ENCODE measurements at regions of chr12 and their contacts with region 1.

Region 1: DNA sequence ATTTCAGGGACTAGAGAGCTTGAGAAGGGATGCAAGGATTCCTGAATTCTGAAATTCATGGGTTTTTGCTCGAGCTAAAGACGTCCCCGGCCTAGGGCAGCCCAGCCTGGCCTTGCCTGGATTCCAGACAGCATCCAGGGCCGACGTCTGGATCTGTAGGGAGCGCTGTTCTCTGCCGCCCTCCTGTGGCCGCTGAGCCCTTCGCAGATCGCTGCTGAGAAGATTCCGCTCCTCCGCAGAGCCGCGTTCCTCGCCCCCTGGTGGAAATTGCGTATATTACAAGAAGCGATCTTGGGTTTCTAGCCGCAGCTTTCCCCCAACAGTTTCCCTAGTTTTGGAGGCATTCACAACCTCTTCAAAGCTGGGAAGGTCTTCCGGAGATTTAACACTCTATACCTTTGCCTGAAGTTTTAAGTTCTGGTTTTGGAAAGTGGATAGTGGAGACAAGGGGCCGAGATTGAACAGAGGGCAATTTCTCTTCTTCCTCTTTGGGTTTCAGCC is 5.1 kb downstream of the CISTR start:
- DNase-seq: peak; percentile 70
- ATAC-seq: peak; percentile 75
- H3K4me3 Mint-ChIP-seq: peak overlapping the region; percentile 44
- H3K27ac Mint-ChIP-seq: peak overlapping the region; percentile 57
- H3K4me1 Mint-ChIP-seq: peaks cover 18% of the 10 kb centered on the region
- H3K27me3 Mint-ChIP-seq: peaks cover 40% of the 10 kb centered on the region
- CTCF ChIP-seq: peak; percentile 100

Region 2: DNA sequence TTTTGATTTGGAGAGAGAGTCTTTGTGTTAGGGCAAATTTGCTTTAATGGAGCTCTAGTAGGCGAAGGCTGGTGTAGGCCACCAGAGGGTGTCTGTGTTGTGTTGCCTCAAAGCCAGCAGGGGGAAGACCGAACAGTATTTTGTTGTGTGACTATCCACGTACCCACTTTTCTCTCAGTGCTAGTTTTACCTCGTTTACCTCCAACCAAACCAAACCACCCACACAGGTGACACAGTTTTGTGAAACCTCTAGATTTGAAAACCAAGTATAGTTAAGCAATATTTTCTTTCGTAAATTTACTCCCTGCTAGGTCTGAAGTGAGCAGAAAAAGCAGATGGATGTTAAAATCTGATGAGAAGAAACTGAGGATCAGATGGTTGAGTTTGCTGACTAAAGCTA is 203.1 kb before region 1 on chr12:
- CTCF ChIA-PET with region 1: interaction called, 29 read pairs
- POLR2A ChIA-PET with region 1: no interaction called
- intact Hi-C with region 1: loop called (anchors 1 kb)
- DNase-seq: no peak
- ATAC-seq: peak; percentile 93
- H3K4me3 Mint-ChIP-seq: no peak overlapping the region
- H3K27ac Mint-ChIP-seq: peak overlapping the region; percentile 67
- H3K4me1 Mint-ChIP-seq: peaks cover 5% of the 10 kb centered on the region
- H3K27me3 Mint-ChIP-seq: no peaks in the 10 kb centered on the region
- CTCF ChIP-seq: no peak

Region 3: GRCh38 chr12:53701518-53702260 is 45.0 kb before region 1 on chr12:
- CTCF ChIA-PET with region 1: interaction called, 99 read pairs
- POLR2A ChIA-PET with region 1: interaction called, 12 read pairs
- intact Hi-C with region 1: loop called (anchors 1 kb)
- DNase-seq: peak; percentile 56
- ATAC-seq: peak; percentile 85
- H3K4me3 Mint-ChIP-seq: no peak overlapping the region
- H3K27ac Mint-ChIP-seq: no peak overlapping the region
- H3K4me1 Mint-ChIP-seq: peaks cover 4% of the 10 kb centered on the region
- H3K27me3 Mint-ChIP-seq: peaks cover 71% of the 10 kb centered on the region
- CTCF ChIP-seq: peak; percentile 65

Region 4: DNA sequence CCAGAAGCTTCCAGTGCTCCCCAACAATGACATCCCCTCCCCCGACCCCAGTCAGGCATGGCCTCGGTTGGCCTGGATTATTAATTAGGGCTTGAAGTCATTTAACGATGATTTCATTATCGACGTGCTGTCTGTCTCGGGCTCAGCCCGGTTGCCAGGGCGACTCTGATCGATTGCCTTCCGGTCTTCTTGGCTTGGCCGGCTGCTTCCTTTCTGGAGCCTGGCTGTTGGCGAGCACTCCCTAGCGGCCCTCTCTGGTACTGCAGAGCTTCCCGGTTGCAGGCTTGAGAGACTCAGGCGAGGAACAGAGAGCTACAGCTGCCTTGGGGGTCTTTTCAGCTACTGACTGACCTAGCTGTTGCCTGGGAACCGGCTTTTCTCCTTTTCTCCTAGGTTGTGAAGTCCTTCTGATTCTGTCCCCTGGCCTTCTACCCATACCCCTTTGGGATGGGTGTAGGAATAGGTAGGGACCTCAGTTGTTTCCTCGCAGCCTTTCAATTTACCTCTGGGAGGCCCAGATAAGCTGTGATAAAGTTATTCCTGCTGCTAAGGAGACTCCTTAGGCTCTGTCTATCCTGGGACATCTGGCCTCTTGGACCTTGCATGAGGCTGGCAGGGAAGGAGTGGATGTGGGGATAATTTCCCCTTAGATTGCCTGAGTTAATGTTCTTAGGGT is 10.6 kb after region 1 on chr12:
- CTCF ChIA-PET with region 1: interaction called, 80 read pairs
- POLR2A ChIA-PET with region 1: interaction called, 3 read pairs
- intact Hi-C with region 1: loop called (anchors 1 kb)
- DNase-seq: peak; percentile 75
- ATAC-seq: peak; percentile 75
- H3K4me3 Mint-ChIP-seq: peak overlapping the region; percentile 48
- H3K27ac Mint-ChIP-seq: peak overlapping the region; percentile 8
- H3K4me1 Mint-ChIP-seq: peaks cover 22% of the 10 kb centered on the region
- H3K27me3 Mint-ChIP-seq: peaks cover 29% of the 10 kb centered on the region
- CTCF ChIP-seq: no peak

Region 5: GRCh38 chr12:54300732-54301427 is 554.2 kb after region 1 on chr12 and contains the start of gene NFE2:
- CTCF ChIA-PET with region 1: no interaction called
- POLR2A ChIA-PET with region 1: no interaction called
- intact Hi-C with region 1: no loop called
- DNase-seq: no peak
- ATAC-seq: peak; percentile 41
- H3K4me3 Mint-ChIP-seq: peak within 1 kb of the TSS; percentile 53
- H3K27ac Mint-ChIP-seq: no peak within 1 kb of the TSS
- H3K4me1 Mint-ChIP-seq: peaks cover 41% of the 10 kb centered on the region
- H3K27me3 Mint-ChIP-seq: peaks cover 47% of the 10 kb centered on the region
- CTCF ChIP-seq: no peak
- total RNA-seq, gene NFE2: not detected in 2 replicates